Heart left ventricle (tissue), 16 donors: ENCODE measurements at regions of chr10 and their contacts with region 1.

Region 1: GRCh38 chr10:124722798-124723783 is 21.1 kb downstream of the FAM53B start:
- DNase-seq: peak in 3 of 5 donors; percentile 61 to 81 (median 81)
- ATAC-seq: peak; percentile 17 to 58 (median 49)
- H3K4me3 ChIP-seq: peak overlapping the region in 2 of 12 donors; percentile 3 to 11
- H3K27ac ChIP-seq: peak overlapping the region; percentile 68 to 93 (median 82)
- H3K4me1 ChIP-seq: peaks cover 34 to 100% (median 97%) of the 10 kb centered on the region in 12 donors
- H3K27me3 ChIP-seq: no peaks in the 10 kb centered on the region
- CTCF ChIP-seq: no peak
- POLR2A ChIP-seq: peak in 1 of 2 donors; percentile 12

Region 2: GRCh38 chr10:124436191-124436638 is 286.9 kb before region 1 on chr10:
- intact Hi-C with region 1: no loop called
- DNase-seq: no peak
- ATAC-seq: no peak
- H3K4me3 ChIP-seq: no peak overlapping the region
- H3K27ac ChIP-seq: no peak overlapping the region
- H3K4me1 ChIP-seq: no peaks in the 10 kb centered on the region
- H3K27me3 ChIP-seq: peaks cover 0 to under 1% (median 0%) of the 10 kb centered on the region in 9 donors
- CTCF ChIP-seq: no peak
- POLR2A ChIP-seq: no peak

Region 3: DNA sequence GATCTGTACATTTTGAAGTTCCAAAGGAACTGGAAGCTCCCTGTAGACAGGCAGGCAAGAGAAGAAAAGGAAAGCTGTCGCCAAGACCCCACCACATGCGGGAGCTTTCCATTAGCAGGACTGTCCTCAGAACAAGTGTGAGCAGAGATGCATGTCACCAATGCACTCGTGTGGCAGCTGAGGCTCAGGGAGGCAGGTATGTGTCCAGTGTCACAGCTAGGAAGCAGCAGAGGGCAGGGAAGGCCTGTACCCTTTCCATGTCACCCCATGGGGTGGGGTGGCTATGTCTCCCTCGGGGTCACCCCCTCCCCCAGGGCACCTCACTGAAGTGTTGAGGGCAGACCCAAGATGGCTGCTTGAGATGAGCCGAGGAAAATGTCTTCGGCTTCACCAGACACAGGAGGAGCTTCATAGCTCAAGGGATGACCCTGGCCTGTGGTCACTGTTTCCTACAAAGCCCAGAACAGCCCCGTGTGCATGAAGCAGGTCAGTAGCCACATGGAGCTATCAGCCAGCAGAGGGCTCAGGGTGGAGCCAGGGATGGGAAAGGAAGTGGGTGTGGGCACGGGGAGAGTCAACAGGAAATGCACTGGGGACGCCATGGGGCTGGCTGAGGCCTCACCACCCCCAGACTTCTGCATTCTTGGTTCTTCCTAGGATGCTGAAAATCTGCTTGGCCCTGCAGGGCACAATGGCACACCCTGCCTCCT is 75.5 kb before region 1 on chr10:
- intact Hi-C with region 1: loop called in 1 of 10 experiments (anchors 5 kb)
- DNase-seq: peak; percentile 75 to 88 (median 84)
- ATAC-seq: peak; percentile 34 to 67 (median 56)
- H3K4me3 ChIP-seq: peak overlapping the region in 1 of 12 donors; percentile 7
- H3K27ac ChIP-seq: peak overlapping the region; percentile 33 to 97 (median 75)
- H3K4me1 ChIP-seq: peaks cover 44 to 100% (median 94%) of the 10 kb centered on the region in 12 donors
- H3K27me3 ChIP-seq: no peaks in the 10 kb centered on the region
- CTCF ChIP-seq: peak in 10 of 12 donors; percentile 11 to 50 (median 28)
- POLR2A ChIP-seq: no peak

Region 4: GRCh38 chr10:124708922-124709520 is 14.1 kb before region 1 on chr10:
- intact Hi-C with region 1: loop called in 1 of 10 experiments (anchors 2 kb)
- DNase-seq: no peak
- ATAC-seq: no peak
- H3K4me3 ChIP-seq: no peak overlapping the region
- H3K27ac ChIP-seq: peak overlapping the region in 11 of 12 donors; percentile 25 to 97 (median 89)
- H3K4me1 ChIP-seq: peaks cover 24 to 99% (median 84%) of the 10 kb centered on the region in 12 donors
- H3K27me3 ChIP-seq: no peaks in the 10 kb centered on the region
- CTCF ChIP-seq: no peak
- POLR2A ChIP-seq: no peak

Region 5: DNA sequence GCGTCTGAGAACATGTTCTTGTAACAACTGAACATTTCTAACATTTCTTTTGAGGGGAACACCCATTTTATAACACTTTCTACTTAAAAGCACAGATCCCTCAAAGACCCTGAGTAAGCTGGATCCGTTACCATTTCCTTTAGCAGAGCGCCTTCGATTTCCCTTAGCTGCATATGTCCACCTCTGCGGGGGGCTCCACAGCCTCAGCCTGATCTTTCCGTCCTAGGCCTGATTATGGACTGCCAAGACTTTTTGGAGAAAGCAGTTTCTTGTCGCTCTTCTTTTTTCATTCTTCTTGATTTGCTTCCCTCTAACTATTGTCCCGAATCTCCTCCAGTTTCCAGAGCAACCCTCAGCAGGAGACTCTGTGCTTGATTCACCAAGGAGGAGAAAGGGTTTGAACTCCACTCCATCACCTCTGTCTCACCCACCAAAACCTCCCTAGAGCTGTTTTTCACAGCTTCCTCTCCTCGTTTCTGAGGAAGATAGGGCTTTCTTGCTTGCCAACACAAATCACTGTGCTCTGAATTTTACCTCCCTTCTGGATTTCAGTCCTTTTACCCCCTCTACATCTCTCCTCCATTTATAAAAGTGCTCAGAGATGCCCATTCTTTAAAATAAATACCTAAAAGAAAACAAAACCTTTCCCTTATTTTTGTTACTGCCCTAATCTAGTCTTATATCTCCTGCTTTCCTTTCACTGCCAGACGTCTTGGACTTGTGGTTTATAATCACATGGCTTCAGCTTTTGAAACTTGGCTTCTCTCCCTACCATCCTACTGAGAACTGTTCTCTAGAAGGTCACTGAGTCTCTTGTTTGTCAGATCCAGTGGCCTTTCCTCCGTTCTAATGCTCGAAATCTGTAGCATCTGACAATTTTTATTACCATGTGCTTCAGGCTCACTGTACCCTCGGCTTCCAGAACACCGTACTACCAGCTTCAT is 188.3 kb after region 1 on chr10:
- intact Hi-C with region 1: no loop called
- DNase-seq: no peak
- ATAC-seq: peak in 2 of 4 donors; percentile 19 to 38
- H3K4me3 ChIP-seq: no peak overlapping the region
- H3K27ac ChIP-seq: peak overlapping the region in 8 of 12 donors; percentile 11 to 66 (median 46)
- H3K4me1 ChIP-seq: peaks cover 0 to 27% (median 15%) of the 10 kb centered on the region in 12 donors
- H3K27me3 ChIP-seq: no peaks in the 10 kb centered on the region
- CTCF ChIP-seq: peak in 2 of 12 donors; percentile 16
- POLR2A ChIP-seq: no peak

Region 6: GRCh38 chr10:124983255-124983705 is 260.2 kb after region 1 on chr10:
- intact Hi-C with region 1: no loop called
- DNase-seq: no peak
- ATAC-seq: peak in 1 of 4 donors; percentile 39
- H3K4me3 ChIP-seq: no peak overlapping the region
- H3K27ac ChIP-seq: no peak overlapping the region
- H3K4me1 ChIP-seq: peaks cover 0 to 11% (median 3%) of the 10 kb centered on the region in 12 donors
- H3K27me3 ChIP-seq: no peaks in the 10 kb centered on the region
- CTCF ChIP-seq: no peak
- POLR2A ChIP-seq: no peak